HCT116 (cell line): ENCODE measurements at regions of chr14 and their contacts with region 1.

Region 1: GRCh38 chr14:105300792-105301533 is at the start of gene BRF1:
- DNase-seq: peak; percentile 89
- ATAC-seq: peak; percentile 86
- H3K4me3 ChIP-seq: peak within 1 kb of the TSS; percentile 83 to 95
- H3K27ac ChIP-seq: peak within 1 kb of the TSS; percentile 90
- H3K4me1 ChIP-seq: peaks cover 22 to 39% of the 10 kb centered on the region in 2 experiments
- H3K27me3 ChIP-seq: no peaks in the 10 kb centered on the region
- CTCF ChIP-seq: no peak
- POLR2A ChIP-seq: no peak
- RAD21 ChIP-seq: no peak
- total RNA-seq, gene BRF1: 41.2 TPM

Region 2: DNA sequence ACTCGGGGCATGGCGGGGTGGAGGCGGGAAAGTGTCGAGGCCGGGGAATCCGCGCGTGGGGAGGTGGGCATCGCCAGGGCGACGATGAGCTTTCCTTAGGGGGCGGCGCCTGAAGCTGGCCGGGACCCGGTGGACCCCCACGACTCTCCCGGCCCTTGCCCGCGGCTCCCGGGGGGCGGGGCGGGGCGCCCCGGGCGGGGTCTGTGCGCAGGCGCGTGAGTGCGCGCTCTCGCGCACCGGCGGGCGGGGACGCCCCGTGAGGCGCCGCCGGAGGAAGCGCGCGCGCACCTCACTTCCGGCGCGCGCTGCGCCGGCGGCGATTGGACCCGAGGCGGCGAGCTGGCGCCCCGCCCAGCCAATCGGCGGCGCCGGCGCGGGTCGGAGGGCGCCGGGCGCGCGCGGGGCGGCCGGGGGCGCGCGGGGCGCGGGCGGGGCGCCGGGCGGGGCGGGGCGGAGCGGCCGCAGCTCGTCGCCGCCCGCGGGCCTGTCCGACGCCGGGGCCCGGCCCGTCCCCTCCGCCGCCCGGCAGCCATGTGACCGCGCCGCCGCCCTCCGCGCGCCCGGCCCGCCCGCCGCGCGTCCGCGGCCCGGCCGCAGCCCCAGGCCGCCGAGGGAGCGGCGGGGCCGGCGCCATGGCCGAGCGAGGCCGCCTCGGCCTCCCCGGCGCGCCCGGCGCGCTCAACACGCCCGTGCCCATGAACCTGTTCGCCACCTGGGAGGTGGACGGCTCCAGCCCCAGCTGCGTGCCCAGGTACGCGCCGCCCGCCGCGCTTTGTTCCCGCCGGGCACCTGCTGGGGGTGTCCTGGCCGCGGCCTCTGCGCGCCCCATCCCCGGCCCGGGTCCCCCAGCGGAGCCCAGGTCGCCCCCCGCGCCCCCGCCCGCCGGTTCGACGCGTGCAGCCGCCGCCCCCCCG is 13.6 kb after region 1 on chr14 and contains the start of gene PACS2:
- CTCF ChIA-PET with region 1: interaction called, 4 read pairs
- POLR2A ChIA-PET with region 1: interaction called, 8 read pairs
- RAD21 ChIA-PET with region 1: no interaction called
- intact Hi-C with region 1: loop called (anchors 2 kb)
- DNase-seq: peak; percentile 47
- ATAC-seq: peak; percentile 81
- H3K4me3 ChIP-seq: peak within 1 kb of the TSS; percentile 72 to 88
- H3K27ac ChIP-seq: peak within 1 kb of the TSS; percentile 73
- H3K4me1 ChIP-seq: peaks cover 8 to 17% of the 10 kb centered on the region in 2 experiments; a peak in 3 of 4 replicates
- H3K27me3 ChIP-seq: no peaks in the 10 kb centered on the region
- CTCF ChIP-seq: no peak
- POLR2A ChIP-seq: no peak
- RAD21 ChIP-seq: no peak
- total RNA-seq, gene PACS2: 75.5 TPM